Left colon (tissue), 2 donors: ENCODE measurements at regions of chr22 and their contacts with region 1.

Region 1: GRCh38 chr22:36180038-36180880 is 19.7 kb upstream of the APOL3 start:
- DNase-seq: peak; percentile 58 to 94
- ATAC-seq: peak; percentile 89

Region 2: DNA sequence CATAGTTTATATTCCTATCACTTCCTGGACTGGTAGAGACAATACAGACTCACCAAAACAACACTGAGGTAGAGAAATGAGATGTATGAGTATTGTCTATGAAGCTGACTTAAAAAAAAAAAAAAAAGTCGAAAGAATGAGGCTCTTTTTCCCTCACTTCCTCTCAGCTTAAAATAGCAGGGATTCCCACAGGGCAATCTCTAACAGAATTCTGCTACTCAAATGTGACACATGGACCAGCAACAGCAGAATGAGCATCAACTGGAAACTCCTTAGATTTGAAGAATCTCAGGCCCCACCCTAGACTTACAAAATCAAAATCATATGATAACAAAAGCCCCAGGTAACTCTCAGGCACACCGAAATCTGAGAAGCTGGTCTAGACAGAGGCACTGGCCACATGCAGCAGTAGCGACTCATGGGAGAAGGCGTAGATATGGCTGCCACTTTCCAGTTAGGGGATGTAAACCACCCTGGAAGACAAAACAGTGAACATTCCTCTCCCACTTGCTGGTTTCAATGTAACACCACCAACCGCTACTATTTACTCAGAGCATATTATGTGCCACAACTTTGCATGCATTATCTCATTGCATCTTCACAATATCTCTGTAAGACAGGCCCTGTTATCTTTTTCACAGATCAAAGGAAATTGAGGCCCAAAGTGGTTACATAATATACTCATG is 279.6 kb before region 1 on chr22:
- intact Hi-C with region 1: no loop called
- DNase-seq: no peak
- ATAC-seq: no peak

Region 3: GRCh38 chr22:36123673-36124630 is 56.3 kb before region 1 on chr22:
- intact Hi-C with region 1: no loop called
- DNase-seq: peak; percentile 96 to 98
- ATAC-seq: peak; percentile 98

Region 4: GRCh38 chr22:36144886-36145541 is 35.2 kb before region 1 on chr22:
- intact Hi-C with region 1: loop called in 1 of 2 experiments (anchors 5 kb)
- DNase-seq: peak; percentile 46 to 51
- ATAC-seq: peak; percentile 84